Right ventricle myocardium inferior (tissue), 1 donor: ENCODE measurements at regions of chr3 and their contacts with region 1.

Region 1: DNA sequence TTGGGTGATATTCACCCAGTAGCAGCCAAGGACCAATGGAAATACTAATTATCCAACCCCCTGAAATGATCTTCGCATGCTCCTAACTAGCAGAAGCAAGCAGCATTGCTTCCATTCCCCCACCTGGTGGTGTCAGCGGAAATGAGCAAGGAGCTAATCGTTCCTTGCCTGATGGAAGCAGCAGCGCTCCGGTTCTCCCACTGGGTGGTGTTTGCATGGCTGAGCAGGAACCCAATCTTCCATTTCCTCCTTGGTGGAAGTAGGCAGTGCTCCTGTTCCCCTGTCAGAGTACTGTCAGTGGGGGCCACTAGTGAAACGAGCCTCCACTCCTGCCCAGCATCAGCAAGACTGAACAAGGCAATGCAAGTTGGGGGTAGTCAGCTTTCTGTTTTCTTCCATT is 311.5 kb downstream of the CACNA2D3 start:
- DNase-seq: no peak
- ATAC-seq: no peak

Region 2: DNA sequence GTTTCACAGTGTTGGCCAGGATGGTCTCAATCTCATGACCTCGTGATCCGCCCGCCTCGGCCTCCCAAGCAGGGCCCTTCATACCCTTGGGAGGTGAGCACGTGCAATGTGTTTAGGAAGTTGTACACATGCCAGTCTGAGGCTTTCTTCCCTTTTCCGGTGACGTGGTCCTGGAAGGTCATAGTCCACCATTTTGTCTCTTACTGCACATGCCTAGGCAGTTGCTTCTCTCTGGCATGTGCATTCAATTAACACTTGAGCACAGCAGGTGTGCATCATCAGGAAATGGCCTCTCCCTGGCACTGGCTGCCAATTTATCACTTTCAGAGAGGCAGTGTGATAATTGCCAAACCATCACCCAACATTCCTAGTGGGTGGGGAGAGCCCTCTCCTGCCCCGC is 520.4 kb before region 1 on chr3:
- intact Hi-C with region 1: no loop called
- DNase-seq: no peak
- ATAC-seq: no peak

Region 3: GRCh38 chr3:54733106-54734006 is 299.5 kb after region 1 on chr3:
- intact Hi-C with region 1: no loop called
- DNase-seq: no peak
- ATAC-seq: no peak

Region 4: GRCh38 chr3:54853573-54854404 is 419.9 kb after region 1 on chr3:
- intact Hi-C with region 1: loop called (anchors 10 kb)
- DNase-seq: peak; percentile 88
- ATAC-seq: peak; percentile 86